HepG2 (cell line): ENCODE measurements at regions of chr10 and their contacts with region 1.

Region 1: DNA sequence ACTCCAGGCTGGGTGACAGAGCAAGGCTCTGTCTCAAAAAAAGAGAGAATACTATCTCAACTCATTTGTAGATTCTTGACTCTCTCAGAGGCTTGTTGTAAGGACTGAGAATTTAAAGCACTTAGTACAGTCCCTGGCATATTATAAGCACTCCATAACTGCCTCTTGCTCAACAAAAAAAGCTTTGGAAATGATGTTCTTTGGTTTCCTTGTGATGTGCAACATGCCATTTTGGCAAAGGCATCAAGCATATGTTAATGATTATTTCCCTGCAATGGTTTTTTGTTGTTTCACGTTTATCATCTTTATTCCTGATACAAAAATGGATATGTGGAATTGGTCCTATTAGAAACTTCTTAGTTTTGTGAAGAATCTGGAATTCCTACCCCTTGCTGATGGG is 15.7 kb downstream of the NOLC1 start:
- DNase-seq: no peak
- ATAC-seq: no peak
- H3K4me3 ChIP-seq: no peak overlapping the region
- H3K27ac ChIP-seq: no peak overlapping the region
- H3K4me1 ChIP-seq: 0 out of 2 replicates have a peak, but pooled peaks cover 5% of the 10 kb centered on the region
- H3K27me3 ChIP-seq: 0 out of 5 replicates have a peak, but pooled peaks cover 0 to 6% of the 10 kb centered on the region in 2 experiments
- CTCF ChIP-seq: no peak
- EP300 ChIP-seq: no peak
- POLR2A ChIP-seq: no peak
- RAD21 ChIP-seq: no peak

Region 2: GRCh38 chr10:102185811-102186527 is 18.1 kb after region 1 on chr10:
- CTCF ChIA-PET with region 1: no interaction called
- POLR2A ChIA-PET with region 1: no interaction called
- in situ Hi-C with region 1: no loop called
- intact Hi-C with region 1: no loop called
- DNase-seq: no peak
- ATAC-seq: no peak
- H3K4me3 ChIP-seq: no peak overlapping the region
- H3K27ac ChIP-seq: no peak overlapping the region
- H3K4me1 ChIP-seq: peaks cover 11% of the 10 kb centered on the region
- H3K27me3 ChIP-seq: no peaks in the 10 kb centered on the region
- CTCF ChIP-seq: no peak
- EP300 ChIP-seq: no peak
- POLR2A ChIP-seq: no peak
- RAD21 ChIP-seq: no peak

Region 3: DNA sequence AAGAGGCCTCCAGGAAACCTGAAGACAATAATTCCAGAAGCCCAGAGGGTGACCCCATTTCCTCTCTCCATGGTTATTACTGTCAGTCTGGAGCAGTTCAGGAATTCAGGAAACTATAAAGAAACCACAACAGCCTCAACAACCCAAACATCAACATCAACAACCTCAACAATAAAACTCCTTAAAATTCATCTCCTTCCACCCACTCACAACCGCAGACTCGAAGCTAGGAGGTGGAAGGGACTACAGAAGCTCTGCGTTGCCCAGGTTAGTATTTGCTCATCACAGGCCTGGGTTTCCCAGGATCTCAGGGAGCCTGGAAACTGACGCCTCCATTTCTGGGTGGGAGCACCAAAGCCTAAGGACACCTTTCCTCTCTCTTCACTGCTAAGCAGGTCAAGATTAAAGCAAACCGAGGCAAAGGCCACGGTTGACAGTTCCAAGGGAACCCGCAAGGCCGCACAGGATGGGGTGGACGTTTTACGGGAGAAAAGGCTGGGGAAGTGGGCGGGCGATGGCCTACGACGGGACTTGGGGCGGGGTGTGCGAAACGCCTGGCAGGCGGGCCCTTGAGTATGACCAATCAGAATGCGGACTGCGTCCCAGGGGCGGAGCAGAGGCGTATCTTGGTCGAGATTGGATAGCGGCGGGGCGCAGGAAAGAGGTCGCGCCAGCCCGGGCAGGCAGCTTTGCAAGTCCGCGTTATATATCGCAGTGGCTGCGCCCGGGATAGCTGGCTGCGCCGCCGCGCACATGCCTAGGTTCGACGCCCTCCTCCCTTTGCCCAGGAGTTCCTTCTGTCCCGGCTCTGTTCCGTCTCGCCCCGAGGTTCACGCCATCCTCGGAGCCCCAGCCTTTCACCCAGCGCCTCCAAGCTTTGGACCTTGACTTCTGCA is 58.0 kb after region 1 on chr10 and contains the start of gene ELOVL3:
- CTCF ChIA-PET with region 1: no interaction called
- POLR2A ChIA-PET with region 1: interaction called, 4 read pairs
- in situ Hi-C with region 1: no loop called
- intact Hi-C with region 1: loop called (anchors 2 kb)
- DNase-seq: peak; percentile 90
- ATAC-seq: peak; percentile 93
- H3K4me3 ChIP-seq: peak within 1 kb of the TSS; percentile 46 to 72 (median 59)
- H3K27ac ChIP-seq: no peak within 1 kb of the TSS
- H3K4me1 ChIP-seq: peaks cover 31% of the 10 kb centered on the region
- H3K27me3 ChIP-seq: peaks cover 0 to 31% of the 10 kb centered on the region in 2 experiments; a peak in 3 of 5 replicates
- CTCF ChIP-seq: no peak
- EP300 ChIP-seq: no peak
- POLR2A ChIP-seq: no peak; a peak in 1 of 4 replicates
- RAD21 ChIP-seq: peak; percentile 20
- total RNA-seq, gene ELOVL3: 0.24 and 0.69 TPM in 2 replicates